MCF 10A (cell line): ENCODE measurements at regions of chr5 and their contacts with region 1.

Region 1: DNA sequence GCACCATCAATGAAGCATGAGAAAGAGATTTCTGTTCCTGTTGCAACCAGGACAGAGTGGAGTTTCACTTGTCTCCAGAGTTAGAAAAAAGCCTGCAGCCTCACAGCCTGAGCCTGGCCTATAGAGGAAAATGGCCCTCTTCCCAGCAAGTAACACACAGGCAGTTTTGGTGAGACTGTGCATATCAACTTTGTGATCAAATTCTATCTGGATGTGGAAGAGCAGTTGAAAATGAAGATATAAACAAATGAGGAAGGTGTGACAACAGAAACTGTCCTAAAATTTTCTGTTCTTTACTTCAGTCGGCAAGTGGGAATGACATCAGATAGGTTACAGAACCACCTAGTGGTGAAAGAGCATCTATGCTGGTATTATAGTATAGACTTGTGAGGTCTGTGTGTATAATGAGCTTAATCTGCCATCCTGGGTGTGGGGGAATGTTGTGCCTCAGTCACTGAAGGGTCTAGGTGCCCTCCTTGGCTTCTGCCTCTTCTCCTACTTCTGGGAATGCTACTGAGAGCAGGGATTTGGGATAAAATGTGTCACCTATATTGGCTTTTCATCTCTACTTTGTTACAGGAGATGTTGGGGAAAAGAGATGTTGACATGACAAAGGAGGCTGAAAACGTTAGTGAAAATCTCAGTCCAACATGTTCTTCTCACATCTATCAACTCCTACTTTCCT is 28.2 kb downstream of the YIPF5 start:
- DNase-seq: peak; percentile 70
- H3K4me3 Mint-ChIP-seq: no peak overlapping the region
- H3K27ac Mint-ChIP-seq: no peak overlapping the region
- H3K4me1 Mint-ChIP-seq: peaks cover 15% of the 10 kb centered on the region
- H3K27me3 Mint-ChIP-seq: no peaks in the 10 kb centered on the region
- CTCF ChIP-seq: peak; percentile 89

Region 2: DNA sequence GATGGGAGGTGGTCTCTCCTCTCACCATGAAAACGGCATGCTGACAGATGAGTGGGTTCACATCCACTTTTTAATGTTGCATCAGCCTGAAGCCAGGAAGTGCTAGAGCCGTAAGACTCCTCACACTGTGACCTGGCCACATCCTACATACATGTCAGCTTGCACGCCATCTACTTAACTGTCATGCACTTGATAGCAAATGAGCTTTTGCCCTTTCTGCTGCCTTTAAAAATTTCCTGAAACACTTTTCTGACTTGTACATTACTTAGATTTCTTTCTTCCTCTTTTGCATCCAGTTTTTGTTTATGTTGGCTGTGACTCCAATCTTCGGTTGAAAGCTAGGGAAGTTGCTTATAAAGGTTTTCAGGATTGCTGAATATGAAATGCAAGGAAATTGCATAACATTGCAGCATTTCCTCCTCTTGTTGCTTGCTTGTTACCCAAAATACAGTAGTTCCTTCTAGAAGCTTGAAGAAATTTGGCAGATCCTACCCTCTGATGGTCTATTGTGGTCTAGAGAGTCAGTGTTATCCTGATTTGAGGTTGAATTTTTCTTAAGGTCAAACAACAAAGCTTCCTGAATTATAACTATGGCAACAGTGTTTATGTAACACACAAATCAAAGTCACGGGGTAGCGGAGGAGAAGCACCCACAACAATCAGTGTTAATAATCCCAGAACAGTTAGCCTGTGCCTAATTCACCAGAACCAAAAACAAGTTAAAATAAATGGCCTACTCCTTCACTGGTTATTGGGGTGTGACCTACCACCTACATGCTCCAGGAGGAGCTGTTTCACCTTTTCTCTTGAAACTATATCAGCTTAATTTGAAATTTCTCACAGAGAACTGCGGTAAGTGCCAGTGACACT is 1139.6 kb before region 1 on chr5:
- CTCF ChIA-PET with region 1: interaction called, 3 read pairs
- POLR2A ChIA-PET with region 1: no interaction called
- intact Hi-C with region 1: loop called (anchors 10 kb)
- DNase-seq: peak; percentile 96
- H3K4me3 Mint-ChIP-seq: no peak overlapping the region
- H3K27ac Mint-ChIP-seq: peak overlapping the region; percentile 92
- H3K4me1 Mint-ChIP-seq: peaks cover 29% of the 10 kb centered on the region
- H3K27me3 Mint-ChIP-seq: no peaks in the 10 kb centered on the region
- CTCF ChIP-seq: peak; percentile 72

Region 3: GRCh38 chr5:143685246-143685802 is 457.0 kb before region 1 on chr5:
- CTCF ChIA-PET with region 1: interaction called, 6 read pairs
- POLR2A ChIA-PET with region 1: no interaction called
- intact Hi-C with region 1: loop called (anchors 5 kb)
- DNase-seq: peak; percentile 49
- H3K4me3 Mint-ChIP-seq: no peak overlapping the region
- H3K27ac Mint-ChIP-seq: no peak overlapping the region
- H3K4me1 Mint-ChIP-seq: no peaks in the 10 kb centered on the region
- H3K27me3 Mint-ChIP-seq: no peaks in the 10 kb centered on the region
- CTCF ChIP-seq: peak; percentile 51

Region 4: DNA sequence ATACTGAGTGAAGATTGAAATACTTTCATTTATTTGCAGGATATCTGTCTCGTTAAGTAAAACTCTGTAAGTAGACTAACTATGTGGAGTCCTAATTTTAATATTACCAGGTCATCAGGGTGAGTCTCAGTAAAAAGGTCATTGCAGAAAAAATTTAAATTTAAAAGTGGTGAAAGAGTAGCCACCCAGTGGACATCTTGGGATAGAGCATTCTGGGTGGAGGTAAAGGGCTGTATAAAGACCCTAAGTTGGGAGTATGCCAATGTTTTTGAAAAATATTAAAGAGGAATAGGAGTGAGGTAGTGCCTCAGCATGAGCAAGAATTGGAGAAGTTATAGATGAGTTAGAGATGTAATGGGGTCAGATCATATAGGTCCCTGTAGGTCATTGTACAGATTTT is 184.8 kb before region 1 on chr5:
- CTCF ChIA-PET with region 1: interaction called, 10 read pairs
- POLR2A ChIA-PET with region 1: no interaction called
- intact Hi-C with region 1: no loop called
- DNase-seq: no peak
- H3K4me3 Mint-ChIP-seq: no peak overlapping the region
- H3K27ac Mint-ChIP-seq: no peak overlapping the region
- H3K4me1 Mint-ChIP-seq: no peaks in the 10 kb centered on the region
- H3K27me3 Mint-ChIP-seq: no peaks in the 10 kb centered on the region
- CTCF ChIP-seq: peak; percentile 51

Region 5: GRCh38 chr5:143985832-143986485 is 156.3 kb before region 1 on chr5:
- CTCF ChIA-PET with region 1: interaction called, 8 read pairs
- POLR2A ChIA-PET with region 1: interaction called, 5 read pairs
- intact Hi-C with region 1: loop called (anchors 5 kb)
- DNase-seq: peak; percentile 77
- H3K4me3 Mint-ChIP-seq: no peak overlapping the region
- H3K27ac Mint-ChIP-seq: peak overlapping the region; percentile 22
- H3K4me1 Mint-ChIP-seq: peaks cover 34% of the 10 kb centered on the region
- H3K27me3 Mint-ChIP-seq: no peaks in the 10 kb centered on the region
- CTCF ChIP-seq: no peak

Region 6: GRCh38 chr5:144131261-144131660 is 11.0 kb before region 1 on chr5:
- CTCF ChIA-PET with region 1: interaction called, 45 read pairs
- POLR2A ChIA-PET with region 1: interaction called, 6 read pairs
- intact Hi-C with region 1: no loop called
- DNase-seq: no peak
- H3K4me3 Mint-ChIP-seq: no peak overlapping the region
- H3K27ac Mint-ChIP-seq: no peak overlapping the region
- H3K4me1 Mint-ChIP-seq: no peaks in the 10 kb centered on the region
- H3K27me3 Mint-ChIP-seq: no peaks in the 10 kb centered on the region
- CTCF ChIP-seq: no peak

Region 7: DNA sequence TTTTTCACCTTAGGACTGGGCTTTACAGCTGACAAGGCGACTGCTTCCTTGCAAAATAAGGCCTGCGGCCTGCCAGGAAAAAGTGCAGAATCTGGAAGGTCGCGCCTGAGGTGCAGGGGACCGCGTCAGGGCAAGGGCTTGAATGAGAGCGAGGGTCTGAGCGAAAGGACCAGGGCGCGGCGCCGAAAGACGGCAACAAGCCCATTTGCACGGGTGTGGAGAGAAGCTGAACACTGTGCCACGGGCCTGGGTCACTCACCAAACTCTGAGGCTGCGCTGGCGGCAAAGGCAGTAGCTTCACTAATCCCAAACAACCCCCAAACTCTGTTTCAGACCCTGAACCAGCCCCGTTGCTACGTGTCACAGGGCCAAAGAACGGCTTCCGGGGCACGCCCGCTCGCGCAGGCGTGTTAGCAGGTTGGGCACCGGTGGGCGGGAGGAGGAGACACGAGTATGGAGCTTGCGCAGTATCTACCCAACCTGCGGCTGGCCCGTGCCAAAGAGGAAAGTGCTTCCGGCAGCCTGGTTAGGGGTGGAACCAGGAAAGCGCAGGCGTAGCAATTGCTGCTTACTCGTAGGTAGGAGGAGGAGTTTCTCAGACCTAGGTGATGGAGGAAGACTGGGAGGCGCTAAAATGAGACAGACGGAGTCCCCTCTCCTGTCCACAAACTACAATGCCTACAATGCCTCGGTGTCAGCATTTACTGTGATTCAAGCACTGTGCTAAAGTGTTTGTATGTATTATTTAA is 28.2 kb after region 1 on chr5 and contains the starts of genes KCTD16 and YIPF5:
- CTCF ChIA-PET with region 1: interaction called, 8 read pairs
- POLR2A ChIA-PET with region 1: interaction called, 16 read pairs
- intact Hi-C with region 1: no loop called
- DNase-seq: peak; percentile 99
- H3K4me3 Mint-ChIP-seq: peak within 1 kb of the TSS; percentile 94
- H3K27ac Mint-ChIP-seq: peak within 1 kb of the TSS; percentile 97
- H3K4me1 Mint-ChIP-seq: peaks cover 37% of the 10 kb centered on the region
- H3K27me3 Mint-ChIP-seq: no peaks in the 10 kb centered on the region
- CTCF ChIP-seq: no peak
- total RNA-seq, gene KCTD16: 0.16 and 0.20 TPM in 2 replicates
- total RNA-seq, gene YIPF5: 88.7 and 115 TPM in 2 replicates

Region 8: DNA sequence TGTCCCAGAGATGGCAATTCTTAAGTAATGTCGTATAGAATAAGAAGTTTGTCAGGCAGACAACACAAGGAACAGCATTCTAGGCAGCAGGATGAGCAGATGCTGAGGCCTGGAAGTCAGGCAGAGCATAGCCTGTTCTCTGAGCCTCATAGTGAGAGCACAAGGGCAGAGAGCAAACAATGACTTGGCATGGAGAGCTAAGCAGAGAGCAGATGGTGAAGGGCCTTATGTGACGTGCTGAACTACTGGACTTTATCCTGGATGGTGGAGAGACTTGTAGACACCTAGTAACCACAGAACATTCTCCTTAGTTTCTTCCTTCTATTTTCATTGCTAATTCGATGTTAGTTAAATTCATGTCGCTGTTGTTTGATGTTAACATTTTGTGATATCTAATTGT is 88.5 kb after region 1 on chr5:
- CTCF ChIA-PET with region 1: no interaction called
- POLR2A ChIA-PET with region 1: no interaction called
- intact Hi-C with region 1: no loop called
- DNase-seq: no peak
- H3K4me3 Mint-ChIP-seq: no peak overlapping the region
- H3K27ac Mint-ChIP-seq: no peak overlapping the region
- H3K4me1 Mint-ChIP-seq: no peaks in the 10 kb centered on the region
- H3K27me3 Mint-ChIP-seq: no peaks in the 10 kb centered on the region
- CTCF ChIP-seq: no peak

Region 9: DNA sequence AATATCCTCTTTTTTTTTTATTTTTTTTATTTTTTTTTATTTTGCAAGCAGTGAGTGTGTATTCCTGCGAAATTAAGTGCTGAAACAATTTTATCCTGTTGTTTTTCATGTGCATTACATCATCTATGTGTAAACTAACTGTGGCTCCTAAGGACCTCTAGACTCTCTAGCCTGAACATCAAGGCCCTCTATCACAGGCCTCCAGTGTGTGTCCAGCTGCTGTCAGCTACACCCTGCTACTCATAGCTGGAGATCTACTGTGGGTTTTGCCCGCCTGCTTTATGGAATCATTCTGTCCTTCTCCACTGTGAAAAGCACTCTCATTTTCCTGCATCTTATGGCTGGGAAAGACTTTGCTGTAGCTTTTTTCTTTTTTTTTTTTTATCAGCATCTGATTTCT is 186.2 kb after region 1 on chr5:
- CTCF ChIA-PET with region 1: no interaction called
- POLR2A ChIA-PET with region 1: no interaction called
- intact Hi-C with region 1: no loop called
- DNase-seq: no peak
- H3K4me3 Mint-ChIP-seq: no peak overlapping the region
- H3K27ac Mint-ChIP-seq: no peak overlapping the region
- H3K4me1 Mint-ChIP-seq: peaks cover 4% of the 10 kb centered on the region
- H3K27me3 Mint-ChIP-seq: no peaks in the 10 kb centered on the region
- CTCF ChIP-seq: no peak